ENCODE measurements at regions of chr10 and their contacts with region 1.

Region 1: DNA sequence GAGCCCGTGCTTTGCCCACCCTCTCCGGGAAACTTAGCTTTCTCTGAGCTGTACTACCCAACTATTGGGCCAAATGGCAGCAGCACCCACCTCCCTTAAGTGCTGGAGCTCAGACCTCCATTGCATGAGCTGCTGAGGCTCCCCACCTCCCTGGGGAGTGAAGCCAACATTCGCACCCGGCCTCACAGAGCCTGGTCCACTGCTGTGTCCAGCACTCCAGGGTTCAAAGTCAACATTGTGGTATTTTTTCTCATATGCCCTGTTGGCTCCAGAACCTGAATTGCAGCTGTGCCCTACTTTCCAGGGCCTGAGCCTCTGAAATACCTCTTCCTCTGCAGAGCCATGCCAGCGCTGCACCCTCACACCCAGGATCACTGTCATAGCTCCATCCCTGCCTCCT is 29.7 kb downstream of the ITGA8 start:
- DNase-seq: no peak
- H3K4me3 ChIP-seq: no peak overlapping the region
- H3K27ac ChIP-seq: no peak overlapping the region
- H3K4me1 ChIP-seq: no peaks in the 10 kb centered on the region
- H3K27me3 ChIP-seq: no peaks in the 10 kb centered on the region
- CTCF ChIP-seq: no peak

Region 2: GRCh38 chr10:15515202-15515601 is 174.8 kb before region 1 on chr10:
- CTCF ChIA-PET with region 1: no interaction called
- dilution Hi-C with region 1: loop called (anchors 5 kb)
- in situ Hi-C with region 1: no loop called
- intact Hi-C with region 1: no loop called
- DNase-seq: no peak
- H3K4me3 ChIP-seq: no peak overlapping the region
- H3K27ac ChIP-seq: no peak overlapping the region
- H3K4me1 ChIP-seq: no peaks in the 10 kb centered on the region
- H3K27me3 ChIP-seq: no peaks in the 10 kb centered on the region
- CTCF ChIP-seq: no peak